IMR-90 (cell line): ENCODE measurements at regions of chr1 and their contacts with region 1.

Region 1: GRCh38 chr1:74005533-74005932 is 192.4 kb downstream of the LRRIQ3 start:
- DNase-seq: no peak
- ATAC-seq: no peak
- H3K4me3 ChIP-seq: no peak overlapping the region
- H3K27ac ChIP-seq: no peak overlapping the region
- H3K4me1 ChIP-seq: no peaks in the 10 kb centered on the region
- H3K27me3 ChIP-seq: no peaks in the 10 kb centered on the region
- CTCF ChIP-seq: no peak
- POLR2A ChIP-seq: no peak
- RAD21 ChIP-seq: no peak

Region 2: GRCh38 chr1:73910466-73910865 is 95.1 kb before region 1 on chr1:
- CTCF ChIA-PET with region 1: no interaction called
- POLR2A ChIA-PET with region 1: no interaction called
- dilution Hi-C with region 1: no loop called
- in situ Hi-C with region 1: no loop called
- intact Hi-C with region 1: no loop called
- DNase-seq: no peak
- ATAC-seq: no peak
- H3K4me3 ChIP-seq: no peak overlapping the region
- H3K27ac ChIP-seq: no peak overlapping the region
- H3K4me1 ChIP-seq: no peaks in the 10 kb centered on the region
- H3K27me3 ChIP-seq: no peaks in the 10 kb centered on the region
- CTCF ChIP-seq: no peak
- POLR2A ChIP-seq: no peak
- RAD21 ChIP-seq: no peak

Region 3: GRCh38 chr1:74429580-74429979 is 424.0 kb after region 1 on chr1:
- CTCF ChIA-PET with region 1: no interaction called
- POLR2A ChIA-PET with region 1: no interaction called
- dilution Hi-C with region 1: no loop called
- in situ Hi-C with region 1: no loop called
- intact Hi-C with region 1: no loop called
- DNase-seq: no peak
- ATAC-seq: no peak
- H3K4me3 ChIP-seq: no peak overlapping the region
- H3K27ac ChIP-seq: no peak overlapping the region
- H3K4me1 ChIP-seq: peaks cover 9% of the 10 kb centered on the region; the same call in 1 of the 2 replicates
- H3K27me3 ChIP-seq: no peaks in the 10 kb centered on the region
- CTCF ChIP-seq: no peak
- POLR2A ChIP-seq: no peak
- RAD21 ChIP-seq: no peak

Region 4: GRCh38 chr1:74468982-74469603 is 463.6 kb after region 1 on chr1:
- CTCF ChIA-PET with region 1: interaction called, 3 read pairs
- POLR2A ChIA-PET with region 1: no interaction called
- dilution Hi-C with region 1: no loop called
- in situ Hi-C with region 1: no loop called
- intact Hi-C with region 1: loop called (anchors 10 kb)
- DNase-seq: peak; percentile 56
- ATAC-seq: peak; percentile 85
- H3K4me3 ChIP-seq: no peak overlapping the region
- H3K27ac ChIP-seq: no peak overlapping the region
- H3K4me1 ChIP-seq: peaks cover 6% of the 10 kb centered on the region; the same call in 1 of the 2 replicates
- H3K27me3 ChIP-seq: no peaks in the 10 kb centered on the region
- CTCF ChIP-seq: peak; percentile 71
- POLR2A ChIP-seq: peak; percentile 37; the same call in 1 of the 2 replicates
- RAD21 ChIP-seq: peak; percentile 80

Region 5: GRCh38 chr1:74504125-74504932 is 498.8 kb after region 1 on chr1:
- CTCF ChIA-PET with region 1: no interaction called
- POLR2A ChIA-PET with region 1: no interaction called
- dilution Hi-C with region 1: no loop called
- in situ Hi-C with region 1: no loop called
- intact Hi-C with region 1: loop called (anchors 5 kb)
- DNase-seq: peak; percentile 50
- ATAC-seq: peak; percentile 87
- H3K4me3 ChIP-seq: no peak overlapping the region
- H3K27ac ChIP-seq: no peak overlapping the region
- H3K4me1 ChIP-seq: no peaks in the 10 kb centered on the region
- H3K27me3 ChIP-seq: no peaks in the 10 kb centered on the region
- CTCF ChIP-seq: peak; percentile 87
- POLR2A ChIP-seq: no peak
- RAD21 ChIP-seq: peak; percentile 86